PC-9 (cell line): ENCODE measurements at regions of chr17 and their contacts with region 1.

Region 1: GRCh38 chr17:37450112-37450511 is 39.6 kb upstream of the DUSP14 start:
- DNase-seq: peak; percentile 48 to 70
- H3K4me3 ChIP-seq: no peak overlapping the region
- H3K27ac ChIP-seq: peak overlapping the region; percentile 25
- H3K4me1 ChIP-seq: peaks cover 52% of the 10 kb centered on the region
- H3K27me3 ChIP-seq: no peaks in the 10 kb centered on the region
- CTCF ChIP-seq: no peak

Region 2: GRCh38 chr17:37476431-37477120 is 26.5 kb after region 1 on chr17:
- CTCF ChIA-PET with region 1: no interaction called
- POLR2A ChIA-PET with region 1: interaction called, 7 read pairs
- intact Hi-C with region 1: loop called (anchors 1 kb)
- DNase-seq: peak; percentile 60 to 97
- H3K4me3 ChIP-seq: peak overlapping the region; percentile 15; the same call in 1 of the 2 replicates
- H3K27ac ChIP-seq: peak overlapping the region; percentile 95
- H3K4me1 ChIP-seq: peaks cover 46% of the 10 kb centered on the region
- H3K27me3 ChIP-seq: no peaks in the 10 kb centered on the region
- CTCF ChIP-seq: no peak